BJ (cell line): ENCODE measurements at regions of chr6 and their contacts with region 1.

Region 1: DNA sequence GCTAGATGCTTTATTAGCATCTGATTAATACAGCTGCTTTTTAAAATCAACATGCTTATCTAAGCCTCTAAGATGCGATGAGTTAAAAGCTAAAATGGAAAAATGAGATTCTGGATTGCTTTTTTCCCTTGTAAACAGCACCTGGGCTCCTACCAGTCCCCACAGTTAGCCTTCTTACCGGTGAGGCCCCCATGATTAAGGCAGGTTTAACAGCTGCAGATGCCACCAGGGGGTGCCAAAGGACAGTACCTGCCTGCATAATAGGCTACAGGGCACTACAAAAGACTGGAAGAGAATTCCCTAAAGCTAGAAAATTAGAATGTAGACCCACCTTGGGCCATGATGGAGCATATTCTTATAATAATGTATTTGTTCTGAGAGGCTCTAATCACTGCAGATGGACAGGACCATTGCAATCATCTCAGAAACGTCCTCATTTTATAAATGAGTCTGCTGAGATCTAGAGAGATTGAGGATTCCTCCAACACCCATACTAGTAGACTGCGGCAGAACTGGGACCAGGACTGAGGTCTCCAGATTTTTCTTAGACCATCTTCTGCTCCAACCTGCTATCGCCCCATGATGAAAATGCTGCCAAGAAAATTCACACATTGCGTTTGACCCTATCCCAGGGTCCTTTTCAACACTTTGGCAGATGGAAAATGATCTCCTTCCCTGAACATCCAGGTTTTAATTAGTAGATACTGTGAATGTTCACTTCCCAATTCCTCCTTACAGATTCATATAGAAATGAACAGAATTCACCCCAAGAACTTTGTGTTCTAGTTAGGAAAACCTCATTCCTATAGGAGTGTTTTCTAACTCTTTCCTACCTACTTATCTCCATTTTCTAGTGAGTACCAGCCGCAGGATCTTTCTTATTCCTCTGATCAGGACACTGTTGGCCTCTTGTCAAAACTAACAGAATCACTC is 148.8 kb downstream of the RPS12 start:
- DNase-seq: no peak
- H3K4me3 ChIP-seq: no peak overlapping the region
- H3K27me3 ChIP-seq: no peaks in the 10 kb centered on the region
- CTCF ChIP-seq: peak; percentile 79

Region 2: GRCh38 chr6:132952031-132952867 is 11.0 kb before region 1 on chr6:
- CTCF ChIA-PET with region 1: interaction called, 20 read pairs
- POLR2A ChIA-PET with region 1: no interaction called
- DNase-seq: no peak
- H3K4me3 ChIP-seq: no peak overlapping the region
- H3K27me3 ChIP-seq: no peaks in the 10 kb centered on the region
- CTCF ChIP-seq: no peak

Region 3: GRCh38 chr6:132973514-132973993 is 10.4 kb after region 1 on chr6:
- CTCF ChIA-PET with region 1: interaction called, 30 read pairs
- POLR2A ChIA-PET with region 1: no interaction called
- DNase-seq: no peak
- H3K4me3 ChIP-seq: no peak overlapping the region
- H3K27me3 ChIP-seq: no peaks in the 10 kb centered on the region
- CTCF ChIP-seq: no peak

Region 4: DNA sequence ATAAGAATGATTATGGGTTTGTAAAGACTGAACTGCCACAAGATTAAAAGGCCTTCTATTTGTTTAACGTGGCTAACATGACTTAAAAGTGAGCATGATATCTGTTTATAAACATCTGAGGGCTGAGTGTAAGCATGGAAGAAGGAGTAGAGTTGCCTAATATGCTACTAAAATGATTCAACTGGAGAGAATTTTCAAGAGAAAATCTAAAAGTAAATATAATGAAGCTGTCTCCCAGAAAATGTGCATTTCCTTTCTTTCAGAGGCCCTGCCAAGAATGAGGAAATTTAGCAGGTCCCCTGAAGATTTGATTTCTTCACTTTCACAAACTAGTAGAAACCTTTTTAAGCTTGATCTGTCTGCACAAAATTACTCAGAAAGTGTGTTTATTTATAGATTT is 273.7 kb after region 1 on chr6:
- CTCF ChIA-PET with region 1: no interaction called
- POLR2A ChIA-PET with region 1: no interaction called
- DNase-seq: peak; percentile 16
- H3K4me3 ChIP-seq: no peak overlapping the region
- H3K27me3 ChIP-seq: peaks cover 9% of the 10 kb centered on the region
- CTCF ChIP-seq: no peak

Region 5: GRCh38 chr6:133512410-133513016 is 549.3 kb after region 1 on chr6:
- CTCF ChIA-PET with region 1: interaction called, 11 read pairs
- POLR2A ChIA-PET with region 1: no interaction called
- DNase-seq: no peak
- H3K4me3 ChIP-seq: no peak overlapping the region
- H3K27me3 ChIP-seq: no peaks in the 10 kb centered on the region; the same call in 1 of the 2 replicates
- CTCF ChIP-seq: peak; percentile 64

Region 6: DNA sequence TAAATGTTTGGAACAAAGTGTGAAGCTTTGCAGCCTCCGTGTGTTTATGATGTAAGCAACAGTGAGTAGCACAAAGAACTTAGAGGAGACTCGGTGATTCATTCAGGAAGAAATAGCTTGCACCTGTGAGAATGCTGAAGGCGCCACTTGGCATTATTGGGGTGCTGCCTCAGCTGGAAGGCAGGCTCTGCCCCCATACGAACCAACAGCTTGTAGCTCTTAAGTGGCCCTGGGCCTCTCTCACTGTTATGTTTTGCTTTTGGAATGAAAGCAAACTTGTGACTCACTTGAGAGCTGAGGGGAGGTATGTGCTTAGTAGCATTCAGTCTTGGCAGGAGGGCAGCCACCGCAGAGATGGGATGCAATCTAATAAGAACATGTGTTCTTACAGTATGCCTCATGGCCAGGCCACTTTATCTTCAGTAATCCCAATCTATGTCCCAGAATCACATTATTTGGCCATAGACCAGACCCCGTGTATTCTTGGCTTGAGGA is 588.7 kb after region 1 on chr6:
- CTCF ChIA-PET with region 1: interaction called, 12 read pairs
- POLR2A ChIA-PET with region 1: interaction called, 3 read pairs
- DNase-seq: peak; percentile 93
- H3K4me3 ChIP-seq: no peak overlapping the region
- H3K27me3 ChIP-seq: no peaks in the 10 kb centered on the region; the same call in 1 of the 2 replicates
- CTCF ChIP-seq: no peak